T-cell (primary cell): ENCODE measurements at regions of chr10 and their contacts with region 1.

Region 1: GRCh38 chr10:105691811-105692210 is 1050.7 kb downstream of the SORCS3 start:
- DNase-seq: no peak
- ATAC-seq: no peak
- H3K4me3 ChIP-seq: no peak overlapping the region
- H3K4me3 Mint-ChIP-seq: no peak overlapping the region
- H3K27ac ChIP-seq: no peak overlapping the region
- H3K27ac Mint-ChIP-seq: no peak overlapping the region
- H3K4me1 ChIP-seq: no peaks in the 10 kb centered on the region
- H3K4me1 Mint-ChIP-seq: no peaks in the 10 kb centered on the region
- H3K27me3 ChIP-seq: no peaks in the 10 kb centered on the region
- H3K27me3 Mint-ChIP-seq: no peaks in the 10 kb centered on the region

Region 2: DNA sequence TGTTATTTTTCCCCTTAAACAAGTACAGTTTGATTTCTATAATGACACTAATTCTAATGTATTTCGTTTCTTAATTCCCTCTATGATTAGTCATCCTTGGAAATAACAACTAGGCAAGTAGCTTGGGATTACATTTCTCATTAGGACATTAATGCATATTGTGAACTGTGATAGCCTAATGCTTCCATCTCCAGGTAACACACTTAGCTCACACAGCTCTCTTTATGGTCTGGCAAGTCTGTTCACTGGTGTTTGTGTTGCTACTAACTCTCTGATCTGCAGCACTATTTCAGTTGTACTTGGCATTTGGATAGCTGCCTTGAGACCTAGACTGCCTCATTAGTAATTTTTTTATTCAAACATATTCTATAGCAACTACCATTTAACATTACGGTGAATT is 197.5 kb before region 1 on chr10:
- CTCF ChIA-PET with region 1: no interaction called
- POLR2A ChIA-PET with region 1: no interaction called
- DNase-seq: no peak
- ATAC-seq: no peak
- H3K4me3 ChIP-seq: no peak overlapping the region
- H3K4me3 Mint-ChIP-seq: no peak overlapping the region
- H3K27ac ChIP-seq: no peak overlapping the region
- H3K27ac Mint-ChIP-seq: no peak overlapping the region
- H3K4me1 ChIP-seq: no peaks in the 10 kb centered on the region
- H3K4me1 Mint-ChIP-seq: no peaks in the 10 kb centered on the region
- H3K27me3 ChIP-seq: no peaks in the 10 kb centered on the region
- H3K27me3 Mint-ChIP-seq: no peaks in the 10 kb centered on the region

Region 3: GRCh38 chr10:105579112-105579511 is 112.7 kb before region 1 on chr10:
- CTCF ChIA-PET with region 1: no interaction called
- POLR2A ChIA-PET with region 1: interaction called in 1 of 2 experiments, 10 read pairs
- DNase-seq: no peak
- ATAC-seq: no peak
- H3K4me3 ChIP-seq: no peak overlapping the region
- H3K4me3 Mint-ChIP-seq: no peak overlapping the region
- H3K27ac ChIP-seq: no peak overlapping the region
- H3K27ac Mint-ChIP-seq: no peak overlapping the region
- H3K4me1 ChIP-seq: no peaks in the 10 kb centered on the region
- H3K4me1 Mint-ChIP-seq: no peaks in the 10 kb centered on the region
- H3K27me3 ChIP-seq: no peaks in the 10 kb centered on the region
- H3K27me3 Mint-ChIP-seq: no peaks in the 10 kb centered on the region

Region 4: GRCh38 chr10:105807935-105808587 is 116.2 kb after region 1 on chr10:
- CTCF ChIA-PET with region 1: no interaction called
- POLR2A ChIA-PET with region 1: no interaction called
- DNase-seq: no peak
- ATAC-seq: no peak
- H3K4me3 ChIP-seq: no peak overlapping the region
- H3K4me3 Mint-ChIP-seq: no peak overlapping the region
- H3K27ac ChIP-seq: no peak overlapping the region
- H3K27ac Mint-ChIP-seq: no peak overlapping the region
- H3K4me1 ChIP-seq: no peaks in the 10 kb centered on the region
- H3K4me1 Mint-ChIP-seq: no peaks in the 10 kb centered on the region
- H3K27me3 ChIP-seq: no peaks in the 10 kb centered on the region
- H3K27me3 Mint-ChIP-seq: peaks cover 0 to 1% of the 10 kb centered on the region in 2 donors